GM10248 (cell line): ENCODE measurements at regions of chr10 and their contacts with region 1.

Region 1: DNA sequence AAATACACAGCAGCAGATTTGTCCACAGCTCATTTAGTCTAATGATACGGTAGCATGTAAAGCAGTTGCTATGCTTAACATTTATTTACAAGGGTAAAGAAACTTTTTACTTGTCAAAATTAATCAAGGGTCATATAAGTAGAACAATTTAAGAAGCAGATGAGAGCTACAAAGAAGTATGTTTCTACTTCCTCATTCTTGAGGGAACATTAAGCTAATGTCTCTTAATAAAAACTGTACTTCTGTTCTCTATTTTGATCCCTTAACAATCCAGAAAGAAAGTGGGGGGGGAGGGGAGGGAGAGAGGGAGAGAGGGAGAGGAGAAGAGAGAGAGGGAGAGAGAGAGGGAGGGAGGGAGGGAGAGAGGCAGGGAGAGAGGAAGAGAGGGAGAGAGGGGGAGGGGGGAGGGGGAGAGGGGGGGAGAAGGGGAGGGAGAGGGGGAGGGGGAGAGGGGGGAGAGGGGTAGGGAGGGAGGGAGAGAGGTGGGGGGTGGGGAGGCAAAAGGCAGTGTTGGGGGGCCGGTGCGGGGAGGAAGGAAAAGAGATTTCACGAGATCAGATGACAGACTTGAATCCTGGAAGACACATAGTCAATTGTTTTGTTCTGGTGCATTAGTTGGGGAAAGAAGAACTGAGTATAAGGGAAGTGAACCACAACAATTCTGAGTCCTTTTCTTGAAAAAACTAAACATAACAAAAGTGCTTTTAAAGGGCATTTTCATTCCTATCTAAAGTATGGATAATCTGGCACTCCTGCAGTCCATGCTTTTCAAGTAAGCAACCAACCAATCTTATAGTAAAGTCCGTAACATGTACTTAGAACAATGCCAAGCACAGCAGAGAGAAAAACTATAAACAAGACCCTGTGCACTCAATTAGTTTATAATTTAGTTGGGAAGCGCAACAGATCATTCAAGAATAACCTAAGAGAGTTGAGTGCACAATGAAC is 128.0 kb downstream of the USP6NL start:
- DNase-seq: no peak
- CTCF ChIP-seq: no peak

Region 2: DNA sequence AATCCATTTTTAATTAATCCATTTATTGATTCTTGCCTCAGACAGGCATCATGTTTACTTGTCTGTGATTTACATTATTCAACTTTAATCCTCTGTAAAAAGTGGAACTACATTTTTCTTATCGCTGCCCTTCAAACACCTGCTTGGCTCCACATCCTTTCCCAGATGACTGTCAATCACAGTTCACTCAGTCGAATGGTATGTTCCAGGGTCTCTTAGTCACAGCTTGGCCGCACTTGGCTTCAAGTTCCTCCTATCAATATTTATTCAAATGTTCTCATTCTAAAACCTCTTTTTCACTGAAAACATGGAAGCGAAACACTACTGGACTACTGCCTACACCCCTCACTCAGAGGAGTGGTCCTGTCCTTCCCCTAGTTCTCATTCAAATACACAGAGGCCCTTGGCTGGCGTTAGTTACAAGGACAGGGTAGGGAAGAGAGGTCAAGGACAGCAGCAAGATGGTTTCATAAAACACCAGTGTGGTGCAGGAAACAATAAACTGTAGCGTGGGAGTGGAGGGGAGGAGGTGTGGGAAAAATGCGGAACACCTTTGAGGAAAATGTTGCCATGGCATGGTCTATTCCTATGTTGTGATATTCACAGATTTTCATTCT is 15.2 kb before region 1 on chr10:
- CTCF ChIA-PET with region 1: no interaction called
- POLR2A ChIA-PET with region 1: no interaction called
- DNase-seq: no peak
- CTCF ChIP-seq: no peak

Region 3: GRCh38 chr10:11499425-11500071 is 16.1 kb after region 1 on chr10:
- CTCF ChIA-PET with region 1: interaction called, 13 read pairs
- POLR2A ChIA-PET with region 1: no interaction called
- DNase-seq: no peak
- CTCF ChIP-seq: no peak